Heart left ventricle (tissue), 16 donors: ENCODE measurements at regions of chr10 and their contacts with region 1.

Region 1: DNA sequence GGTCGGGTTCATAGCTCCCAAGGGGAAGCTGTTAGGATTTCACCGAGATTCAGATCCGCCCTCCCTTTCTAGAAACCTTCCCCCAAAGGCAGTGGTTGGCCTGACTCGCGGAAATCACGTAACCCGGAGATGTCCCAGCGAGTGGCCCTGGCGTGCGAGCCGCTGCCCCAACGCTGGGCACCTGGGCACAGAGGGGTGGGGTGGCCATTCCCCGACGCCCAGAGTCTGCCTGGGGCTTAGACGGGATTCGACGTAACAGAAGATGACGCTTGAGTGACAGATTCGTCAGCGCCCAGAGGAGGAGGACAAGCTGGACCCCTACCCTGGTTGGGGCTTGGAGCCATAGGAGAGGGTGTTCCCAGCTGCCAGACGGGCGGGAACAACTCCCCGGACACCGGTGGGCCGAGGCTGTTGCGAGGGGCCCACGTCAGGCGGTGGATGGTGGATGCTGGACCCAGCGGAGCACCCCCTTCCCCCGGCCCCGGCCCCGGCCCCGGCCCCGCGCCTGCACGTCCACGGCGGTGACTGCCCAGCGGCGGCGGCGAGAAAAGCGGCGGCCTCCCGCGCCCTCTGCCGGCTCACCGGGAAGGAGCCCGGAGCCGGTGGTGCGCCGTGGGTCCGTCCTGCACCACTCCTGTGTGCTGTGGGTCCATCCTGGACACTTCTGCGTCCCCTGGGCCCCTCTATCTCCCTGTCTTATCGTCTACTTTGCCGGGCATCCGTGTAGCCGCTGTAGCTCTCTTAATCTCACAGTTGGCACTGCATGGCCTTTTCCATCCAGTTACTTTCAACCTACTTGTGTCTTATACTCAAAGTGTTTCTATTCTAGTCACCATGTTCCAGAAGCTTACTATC is 35.4 kb upstream of the KNDC1 start:
- DNase-seq: peak in 3 of 5 donors; percentile 21 to 62 (median 42)
- ATAC-seq: peak in 3 of 4 donors; percentile 77 to 82 (median 78)
- H3K4me3 ChIP-seq: no peak overlapping the region
- H3K27ac ChIP-seq: no peak overlapping the region
- H3K4me1 ChIP-seq: peaks cover 0 to 12% (median 0%) of the 10 kb centered on the region in 12 donors
- H3K27me3 ChIP-seq: peaks cover 0 to 37% (median 0%) of the 10 kb centered on the region in 9 donors
- CTCF ChIP-seq: peak; percentile 34 to 72 (median 62)
- POLR2A ChIP-seq: no peak

Region 2: DNA sequence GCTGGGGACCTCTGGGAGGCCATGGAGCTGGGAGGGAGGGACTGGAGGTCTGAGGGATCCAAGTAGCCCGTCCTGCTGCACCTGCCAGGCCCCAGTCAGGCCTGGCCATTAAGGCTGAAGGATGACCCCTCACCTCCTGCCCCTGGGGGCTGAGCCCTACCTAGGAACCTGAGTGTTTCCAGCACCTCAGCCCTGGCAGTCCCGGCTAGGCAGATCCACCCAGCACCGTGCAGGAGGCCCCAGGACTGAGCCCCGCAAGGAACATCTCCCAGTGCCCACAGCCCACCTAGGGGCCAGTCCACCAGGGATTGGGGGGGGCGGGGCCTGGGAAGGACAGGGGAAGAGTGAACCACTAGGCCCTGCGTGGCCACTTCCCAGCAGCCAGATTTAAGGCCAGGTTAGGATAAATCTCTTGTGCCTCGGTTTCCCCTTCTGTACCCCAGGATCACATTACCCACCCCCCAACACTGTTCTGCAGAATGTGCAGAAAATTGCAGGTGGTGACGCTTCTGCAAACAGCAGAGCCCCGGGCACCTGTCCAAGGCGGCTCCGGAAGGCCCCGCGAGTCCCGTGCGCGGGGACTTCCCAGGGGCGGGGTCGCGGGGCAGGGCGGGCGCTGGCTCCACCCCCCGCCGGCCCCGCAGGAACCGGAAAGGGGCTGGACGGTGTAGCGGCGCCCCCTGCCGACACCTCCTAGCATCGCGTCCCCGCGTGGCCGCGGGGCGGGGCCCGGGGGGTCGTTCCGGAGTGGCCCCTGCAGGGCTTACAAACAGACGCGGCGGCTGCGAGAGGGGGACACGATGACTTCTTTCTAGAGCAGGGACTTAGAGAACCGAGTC is 671.7 kb before region 1 on chr10:
- intact Hi-C with region 1: loop called in 1 of 10 experiments (anchors 10 kb)
- DNase-seq: peak; percentile 80 to 92 (median 87)
- ATAC-seq: peak; percentile 56 to 86 (median 78)
- H3K4me3 ChIP-seq: peak overlapping the region in 9 of 12 donors; percentile 1 to 37 (median 17)
- H3K27ac ChIP-seq: peak overlapping the region in 1 of 12 donors; percentile 43
- H3K4me1 ChIP-seq: peaks cover 0 to 29% (median 12%) of the 10 kb centered on the region in 12 donors
- H3K27me3 ChIP-seq: peaks cover 0 to 5% (median 0%) of the 10 kb centered on the region in 9 donors
- CTCF ChIP-seq: peak; percentile 92 to 99 (median 97)
- POLR2A ChIP-seq: no peak

Region 3: DNA sequence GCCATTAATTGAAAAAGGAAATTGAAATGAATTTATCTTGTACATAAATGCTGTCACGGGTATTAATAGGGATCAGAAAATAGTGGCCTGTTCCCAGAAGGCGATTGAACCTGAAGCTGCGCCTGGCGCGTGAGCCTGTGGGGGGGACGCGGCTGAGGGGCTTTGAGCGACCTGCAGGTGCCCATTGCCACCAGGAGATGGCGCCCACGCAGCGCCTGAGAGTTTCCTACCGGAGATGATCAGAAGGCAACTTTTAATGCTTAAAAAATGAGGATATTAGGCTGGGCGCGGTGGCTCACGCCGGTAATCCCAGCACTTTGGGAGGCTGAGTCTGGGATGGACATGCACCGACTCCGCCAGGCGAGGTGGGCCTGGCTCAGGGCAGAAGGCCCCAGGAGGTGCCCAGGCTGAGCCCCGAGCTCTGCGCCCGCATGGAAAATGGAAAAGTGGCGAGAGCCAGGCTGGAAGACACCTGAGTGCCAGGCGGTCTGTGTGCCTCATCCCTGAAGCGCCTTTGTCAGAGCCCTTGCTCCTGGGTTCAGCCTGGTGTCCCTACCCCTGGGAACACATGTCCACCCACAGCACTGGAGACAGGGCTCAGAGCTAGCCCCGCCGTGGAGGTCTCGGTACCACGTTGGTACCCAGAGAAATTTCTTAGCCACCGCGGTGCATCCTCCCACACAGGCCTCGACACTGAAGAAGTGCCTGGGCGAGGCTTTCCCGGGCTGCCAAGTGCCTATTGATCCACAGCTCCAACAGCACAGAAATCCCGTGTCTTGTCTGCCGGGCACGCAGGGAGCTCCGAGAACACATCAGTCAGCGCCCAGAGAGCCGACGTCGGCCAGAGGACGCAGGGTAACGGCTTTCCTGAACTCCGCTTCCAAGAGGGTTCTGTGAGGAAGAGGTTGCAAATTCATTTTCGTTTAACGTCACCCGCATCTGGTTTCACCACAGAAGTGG is 469.6 kb before region 1 on chr10:
- intact Hi-C with region 1: loop called in 2 of 10 experiments (anchors 10 kb)
- DNase-seq: peak in 2 of 5 donors; percentile 45 to 53
- ATAC-seq: no peak
- H3K4me3 ChIP-seq: no peak overlapping the region
- H3K27ac ChIP-seq: no peak overlapping the region
- H3K4me1 ChIP-seq: peaks cover 0 to 9% (median 0%) of the 10 kb centered on the region in 12 donors
- H3K27me3 ChIP-seq: no peaks in the 10 kb centered on the region
- CTCF ChIP-seq: peak; percentile 77 to 93 (median 89)
- POLR2A ChIP-seq: no peak

Region 4: DNA sequence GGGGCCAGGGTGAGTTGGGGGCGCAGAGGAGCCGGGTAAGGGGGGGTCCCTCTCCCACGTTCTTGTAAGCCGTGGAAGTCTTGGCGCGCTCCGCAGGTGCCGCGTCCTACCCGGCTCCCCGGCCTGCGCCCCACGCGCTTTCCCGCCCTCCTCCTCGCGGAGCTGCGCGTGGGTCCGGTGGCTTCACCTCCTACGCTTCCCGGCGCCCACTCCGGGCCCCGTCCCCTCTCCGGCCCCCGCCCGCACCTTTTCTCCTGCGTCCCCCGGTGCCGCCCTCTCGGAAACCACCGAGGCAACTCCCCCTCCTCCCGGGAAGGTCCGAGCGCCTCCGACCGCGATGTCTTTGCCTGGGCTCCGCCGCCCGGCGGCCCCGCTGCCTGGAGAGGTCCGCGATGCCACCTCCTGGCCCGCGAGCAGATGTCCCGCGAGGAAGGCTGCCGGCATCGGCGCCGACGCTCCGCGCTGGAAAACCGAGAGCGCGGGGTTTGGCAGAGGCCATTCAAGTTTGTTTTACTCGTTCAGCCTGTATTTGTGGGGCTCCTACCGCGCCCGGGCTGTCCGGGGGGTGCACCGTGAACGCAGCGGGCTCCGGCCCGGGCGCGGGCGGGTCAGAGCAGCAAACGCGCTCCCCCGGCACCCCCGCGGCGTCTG is 336.3 kb before region 1 on chr10:
- intact Hi-C with region 1: no loop called
- DNase-seq: no peak
- ATAC-seq: peak in 2 of 4 donors; percentile 27 to 49
- H3K4me3 ChIP-seq: no peak overlapping the region
- H3K27ac ChIP-seq: no peak overlapping the region
- H3K4me1 ChIP-seq: peaks cover 0 to 47% (median 14%) of the 10 kb centered on the region in 12 donors
- H3K27me3 ChIP-seq: peaks cover 47 to 80% (median 67%) of the 10 kb centered on the region in 9 donors
- CTCF ChIP-seq: peak in 3 of 12 donors; percentile 5 to 17 (median 12)
- POLR2A ChIP-seq: no peak

Region 5: DNA sequence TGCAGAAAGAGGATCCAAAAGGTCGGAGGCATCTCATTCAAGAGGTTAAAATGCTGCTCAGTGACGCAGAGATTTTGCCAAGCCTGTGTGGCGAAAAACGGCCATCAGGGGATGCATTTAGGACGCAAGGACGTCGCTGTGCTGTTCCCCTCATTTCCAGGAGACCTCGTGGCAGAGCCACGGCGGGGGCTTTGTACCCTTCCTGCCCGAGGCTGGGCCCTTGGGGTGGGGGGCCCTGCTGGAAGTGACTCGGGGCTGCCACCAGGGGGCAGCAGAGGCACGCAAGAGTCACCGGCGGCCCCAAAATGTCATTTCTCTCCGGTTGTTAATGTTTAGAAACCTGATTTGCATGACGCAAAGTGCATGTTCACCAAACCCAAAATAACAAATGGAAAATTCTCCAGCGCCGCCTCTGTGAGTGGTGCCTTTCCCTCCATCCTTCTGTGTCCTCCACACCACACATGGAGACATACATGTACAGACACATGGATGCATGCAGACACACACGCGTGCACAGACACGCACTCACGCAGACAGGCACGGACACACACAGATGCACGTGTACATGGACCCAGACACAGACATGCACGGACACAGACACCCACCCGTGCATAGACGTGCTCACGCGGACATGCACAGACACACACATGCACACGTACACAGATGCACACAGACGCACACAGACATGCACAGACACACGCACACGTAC is 287.6 kb before region 1 on chr10:
- intact Hi-C with region 1: loop called in 9 of 10 experiments (anchors 2 to 10 kb)
- DNase-seq: peak in 1 of 5 donors; percentile 14
- ATAC-seq: peak in 3 of 4 donors; percentile 40 to 64 (median 59)
- H3K4me3 ChIP-seq: peak overlapping the region in 1 of 12 donors; percentile 3
- H3K27ac ChIP-seq: no peak overlapping the region
- H3K4me1 ChIP-seq: peaks cover 0 to 6% (median 0%) of the 10 kb centered on the region in 12 donors
- H3K27me3 ChIP-seq: peaks cover 10 to 55% (median 22%) of the 10 kb centered on the region in 9 donors
- CTCF ChIP-seq: peak; percentile 89 to 99 (median 96)
- POLR2A ChIP-seq: no peak

Region 6: DNA sequence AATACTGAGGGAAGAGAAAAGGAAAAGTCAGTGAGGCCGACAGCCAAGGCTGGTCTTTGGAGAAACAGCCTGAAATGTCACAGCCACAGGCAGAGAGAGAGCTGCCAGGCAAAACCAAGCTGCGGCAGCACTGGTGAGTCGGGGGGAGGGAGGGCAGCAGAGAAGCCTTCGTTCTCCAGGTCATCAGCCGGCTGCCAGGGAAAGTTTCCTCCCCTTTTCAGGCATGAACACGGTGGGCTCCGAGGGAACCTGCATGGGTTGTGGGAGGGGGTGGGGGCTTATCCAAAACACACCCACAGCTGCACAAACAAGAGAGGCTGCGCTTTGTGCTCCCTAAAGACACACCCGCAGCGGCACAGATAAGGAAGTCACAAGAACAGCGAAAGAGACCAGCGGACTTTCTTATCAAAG is 276.3 kb before region 1 on chr10:
- intact Hi-C with region 1: loop called in 3 of 10 experiments (anchors 5 to 10 kb)
- DNase-seq: peak in 1 of 5 donors; percentile 14
- ATAC-seq: peak in 1 of 4 donors; percentile 36
- H3K4me3 ChIP-seq: peak overlapping the region in 5 of 12 donors; percentile 5 to 33 (median 12)
- H3K27ac ChIP-seq: no peak overlapping the region
- H3K4me1 ChIP-seq: peaks cover 0 to 11% (median 0%) of the 10 kb centered on the region in 12 donors
- H3K27me3 ChIP-seq: peaks cover 0 to 17% (median 5%) of the 10 kb centered on the region in 9 donors
- CTCF ChIP-seq: no peak
- POLR2A ChIP-seq: no peak

Region 7: DNA sequence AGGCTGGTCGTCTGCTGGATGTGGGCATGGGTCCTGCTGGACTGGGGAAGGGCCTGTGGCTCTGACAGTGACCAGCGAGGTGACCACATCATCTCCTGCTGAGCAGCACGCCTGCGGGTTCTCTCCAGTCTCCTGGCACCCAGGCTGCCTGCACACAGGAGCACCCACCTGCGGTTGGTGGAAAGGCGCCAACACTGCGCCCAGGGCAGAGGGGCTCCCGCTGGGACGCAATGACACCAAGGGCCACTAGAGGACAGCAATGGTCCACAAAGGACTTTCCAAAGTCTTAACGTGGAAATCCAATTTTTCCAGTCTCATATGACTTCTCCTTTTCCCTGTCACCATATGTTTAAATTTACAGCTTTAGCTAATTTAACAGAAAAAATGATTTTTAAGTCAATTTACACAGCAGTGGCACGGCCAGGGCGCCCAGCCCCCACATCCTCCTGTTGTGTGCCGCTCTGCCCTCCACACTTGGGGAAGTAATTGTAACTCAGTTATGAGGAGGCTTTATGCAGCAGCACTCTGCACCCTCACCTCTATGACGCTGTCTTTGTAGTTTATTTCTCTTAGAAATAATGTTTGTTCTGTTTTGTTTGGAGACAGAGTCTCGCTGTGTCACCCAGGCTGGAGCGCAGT is 220.3 kb before region 1 on chr10:
- intact Hi-C with region 1: loop called in 2 of 10 experiments (anchors 10 kb)
- DNase-seq: peak in 3 of 5 donors; percentile 5 to 39 (median 36)
- ATAC-seq: peak in 2 of 4 donors; percentile 26 to 65
- H3K4me3 ChIP-seq: no peak overlapping the region
- H3K27ac ChIP-seq: no peak overlapping the region
- H3K4me1 ChIP-seq: no peaks in the 10 kb centered on the region
- H3K27me3 ChIP-seq: peaks cover 0 to 5% (median 0%) of the 10 kb centered on the region in 9 donors
- CTCF ChIP-seq: peak; percentile 61 to 81 (median 67)
- POLR2A ChIP-seq: no peak

Region 8: DNA sequence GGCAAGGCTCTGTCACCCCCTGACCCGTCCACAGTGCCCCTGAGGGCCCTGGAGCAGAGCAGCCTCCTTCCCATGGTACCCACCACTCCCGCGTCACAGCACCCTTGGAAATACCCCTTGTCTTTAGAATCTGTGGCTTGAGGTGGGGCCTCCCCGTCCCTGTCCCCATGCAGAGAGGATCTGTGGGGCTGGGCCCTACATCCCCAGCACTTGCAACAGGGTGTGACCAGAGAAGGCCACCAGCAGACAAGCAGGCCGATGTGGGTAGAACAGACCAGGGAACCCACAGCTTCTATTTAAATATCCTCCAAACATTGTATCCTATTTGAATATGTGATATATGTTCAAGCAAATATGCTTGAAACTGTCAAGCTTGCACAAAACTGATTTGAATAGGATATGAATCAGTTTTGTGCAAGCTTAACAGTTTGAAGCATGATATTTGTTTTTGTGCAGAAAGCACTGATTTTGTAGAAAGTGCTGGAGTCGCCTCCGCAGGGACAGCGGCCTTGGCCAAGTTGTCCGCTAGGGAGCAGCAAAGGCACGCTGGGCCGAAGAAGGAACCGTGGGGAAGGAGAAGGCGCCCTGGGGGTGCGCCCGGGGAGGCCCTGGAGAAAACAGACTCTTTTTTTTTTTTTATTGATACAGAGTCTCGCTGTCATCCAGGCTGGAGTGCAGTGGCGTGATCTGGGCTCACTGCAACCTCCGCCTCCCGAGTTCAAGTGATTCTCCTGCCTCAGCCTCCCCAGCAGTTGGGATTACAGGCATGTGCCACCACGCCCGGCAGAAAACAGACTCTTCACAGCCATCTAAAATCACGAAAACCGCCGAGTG is 184.4 kb before region 1 on chr10:
- intact Hi-C with region 1: loop called (anchors 2 to 10 kb)
- DNase-seq: peak in 2 of 5 donors; percentile 54 to 62
- ATAC-seq: peak in 2 of 4 donors; percentile 42 to 53
- H3K4me3 ChIP-seq: no peak overlapping the region
- H3K27ac ChIP-seq: no peak overlapping the region
- H3K4me1 ChIP-seq: peaks cover 0 to 20% (median 8%) of the 10 kb centered on the region in 12 donors
- H3K27me3 ChIP-seq: peaks cover 0 to 42% (median 18%) of the 10 kb centered on the region in 9 donors
- CTCF ChIP-seq: peak; percentile 51 to 81 (median 66)
- POLR2A ChIP-seq: no peak

Region 9: DNA sequence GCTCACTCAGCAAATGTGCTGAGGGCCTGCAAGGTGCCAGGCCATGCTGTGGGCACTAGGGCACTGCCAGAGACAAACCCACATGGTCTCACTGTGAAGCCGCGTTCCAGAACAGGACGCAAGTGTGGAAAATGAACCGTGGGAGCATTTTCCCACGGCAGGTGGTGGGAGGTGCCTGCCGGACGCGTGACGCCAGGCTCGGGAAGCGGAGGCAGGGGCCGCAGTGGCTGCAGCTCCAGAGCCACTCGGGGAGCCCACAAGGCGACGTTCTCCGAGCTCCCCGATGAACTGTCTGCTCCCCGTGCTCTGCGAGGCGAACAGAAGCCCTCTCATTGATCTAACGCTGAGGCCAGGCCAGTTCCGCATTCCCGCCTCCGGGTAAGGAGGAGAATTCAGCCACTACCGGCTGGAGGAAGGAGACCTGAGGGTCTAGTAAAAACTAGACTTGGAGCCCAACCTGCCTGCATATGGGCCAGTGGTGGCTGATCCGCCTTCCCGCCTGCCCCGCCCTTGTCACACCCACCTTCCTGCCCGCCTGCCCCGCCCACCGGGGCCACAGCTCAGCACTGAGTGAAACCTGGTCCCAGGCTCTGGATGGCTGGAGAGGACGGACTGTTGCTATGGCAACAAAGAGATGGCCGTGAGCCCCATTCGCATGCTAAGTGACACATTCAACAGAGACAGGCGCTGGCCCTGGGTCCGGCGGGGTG is 23.7 kb before region 1 on chr10:
- intact Hi-C with region 1: no loop called
- DNase-seq: peak in 1 of 5 donors; percentile 54
- ATAC-seq: peak in 1 of 4 donors; percentile 60
- H3K4me3 ChIP-seq: no peak overlapping the region
- H3K27ac ChIP-seq: no peak overlapping the region
- H3K4me1 ChIP-seq: peaks cover 0 to 8% (median 0%) of the 10 kb centered on the region in 12 donors
- H3K27me3 ChIP-seq: peaks cover 0 to 77% (median 28%) of the 10 kb centered on the region in 9 donors
- CTCF ChIP-seq: no peak
- POLR2A ChIP-seq: no peak